ENCODE measurements at regions of chr10 and their contacts with region 1.

Region 1: GRCh38 chr10:98309366-98310355 is 41.7 kb upstream of the LOXL4 start:
- DNase-seq: no peak
- H3K4me3 ChIP-seq: peak overlapping the region in 1 of 8 donors; percentile 32
- H3K27ac ChIP-seq: no peak overlapping the region
- H3K4me1 ChIP-seq: peaks cover 0 to 12% (median 8%) of the 10 kb centered on the region in 6 donors
- H3K27me3 ChIP-seq: peaks cover 0 to 73% (median 8%) of the 10 kb centered on the region in 7 donors
- CTCF ChIP-seq: peak; percentile 21 to 81 (median 61)
- POLR2A ChIP-seq: no peak

Region 2: DNA sequence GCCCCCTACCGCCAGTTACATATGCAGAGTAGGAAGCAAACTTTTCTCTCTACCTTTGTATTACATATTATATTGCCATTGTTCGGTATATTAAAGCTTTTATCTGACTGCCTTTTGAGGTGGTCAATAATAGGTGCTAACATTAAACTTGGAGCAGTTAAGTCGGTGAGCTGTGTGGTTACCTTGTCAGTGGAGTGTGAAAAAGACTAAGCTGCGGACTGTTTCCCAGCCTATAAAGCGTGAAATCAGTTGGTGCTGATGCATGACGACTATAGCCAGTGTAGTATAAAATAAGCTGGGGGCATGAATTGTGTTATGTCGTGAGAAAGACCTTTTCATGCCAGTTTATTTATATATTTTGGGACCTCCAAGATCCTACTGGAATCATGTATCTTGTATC is 141.5 kb before region 1 on chr10:
- intact Hi-C with region 1: loop called (anchors 10 kb)
- DNase-seq: no peak
- H3K4me3 ChIP-seq: no peak overlapping the region
- H3K27ac ChIP-seq: no peak overlapping the region
- H3K4me1 ChIP-seq: peaks cover 3 to 43% (median 27%) of the 10 kb centered on the region in 6 donors
- H3K27me3 ChIP-seq: no peaks in the 10 kb centered on the region
- CTCF ChIP-seq: no peak
- POLR2A ChIP-seq: no peak

Region 3: DNA sequence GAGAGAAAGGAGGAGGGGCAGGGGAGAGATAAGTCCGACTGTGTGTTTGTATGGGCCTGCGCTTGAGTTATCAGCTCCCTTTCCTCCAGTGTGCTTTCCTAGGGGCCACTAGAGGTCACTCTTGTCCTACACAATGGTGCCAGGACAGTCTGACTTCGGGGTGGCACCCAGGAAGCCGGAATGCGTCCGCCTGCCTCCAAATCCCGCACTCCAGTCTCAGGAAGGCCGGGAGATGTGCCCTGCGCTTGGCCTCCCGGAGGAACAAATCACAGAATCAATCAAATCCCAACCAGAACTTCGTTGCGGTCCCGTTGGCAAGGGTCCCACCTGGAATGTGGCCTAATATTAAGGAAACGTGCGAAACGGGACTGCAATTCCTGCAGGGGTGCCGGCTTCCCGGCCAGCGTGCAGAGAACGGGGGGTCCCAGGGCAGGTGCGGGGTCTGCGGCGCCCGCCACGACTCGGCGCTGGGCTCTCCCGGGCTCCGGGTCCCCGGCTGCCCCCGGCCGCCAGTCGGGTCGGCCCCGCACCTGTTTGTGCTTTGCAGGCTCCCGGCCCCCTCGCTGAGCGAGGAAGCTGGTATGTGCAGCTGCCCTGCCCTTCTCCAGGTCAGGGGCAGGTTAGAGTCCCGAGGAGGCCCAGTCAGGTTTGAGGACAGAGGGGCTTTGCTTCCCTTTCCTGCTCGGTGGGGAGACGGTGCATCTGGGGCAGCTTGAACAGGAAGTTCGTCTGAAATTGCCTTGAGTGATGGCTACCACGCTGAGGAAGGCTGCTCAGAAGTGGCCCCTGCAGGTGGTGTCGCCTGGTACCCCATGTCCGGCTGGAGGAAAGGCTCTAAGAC is 158.1 kb after region 1 on chr10:
- intact Hi-C with region 1: no loop called
- DNase-seq: peak; percentile 87
- H3K4me3 ChIP-seq: peak overlapping the region; percentile 45 to 83 (median 52)
- H3K27ac ChIP-seq: peak overlapping the region in 4 of 8 donors; percentile 44 to 74 (median 57)
- H3K4me1 ChIP-seq: peaks cover 6 to 32% (median 18%) of the 10 kb centered on the region in 6 donors
- H3K27me3 ChIP-seq: peaks cover 0 to 55% (median 5%) of the 10 kb centered on the region in 7 donors
- CTCF ChIP-seq: peak; percentile 80 to 92 (median 87)
- POLR2A ChIP-seq: no peak

Region 4: GRCh38 chr10:98696516-98696915 is 386.9 kb after region 1 on chr10:
- intact Hi-C with region 1: no loop called
- DNase-seq: no peak
- H3K4me3 ChIP-seq: no peak overlapping the region
- H3K27ac ChIP-seq: no peak overlapping the region
- H3K4me1 ChIP-seq: no peaks in the 10 kb centered on the region
- H3K27me3 ChIP-seq: peaks cover 0 to 5% (median 0%) of the 10 kb centered on the region in 7 donors
- CTCF ChIP-seq: no peak
- POLR2A ChIP-seq: no peak

Measured in spleen (tissue), 13 donors.